GM12878 (cell line): ENCODE measurements at regions of chr6 and their contacts with region 1.

Region 1: DNA sequence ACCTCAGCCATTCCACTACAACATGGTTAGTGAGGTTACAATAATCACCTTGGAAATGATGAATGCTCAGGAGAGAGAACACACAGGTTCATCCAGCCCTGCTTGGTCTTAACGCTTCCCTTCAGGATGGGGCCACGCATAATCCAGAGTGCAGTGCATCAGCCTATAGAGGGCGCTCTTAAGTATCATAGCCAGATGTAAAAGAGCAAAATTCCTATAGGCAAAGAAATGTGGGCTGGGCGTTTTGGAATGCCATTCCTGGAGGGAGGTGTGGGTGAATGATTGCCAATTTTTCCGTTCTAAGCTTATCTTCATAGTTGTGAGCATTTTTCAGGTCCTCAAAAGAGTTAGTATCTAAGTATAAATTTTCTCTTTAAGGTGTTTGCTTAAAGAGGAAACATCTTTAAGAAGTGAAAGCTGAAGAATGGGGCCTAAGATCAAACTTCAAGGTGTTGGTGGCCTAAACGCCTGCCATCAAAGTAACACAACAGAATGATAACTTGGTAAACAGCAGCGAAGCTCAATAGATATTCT is 1.8 kb downstream of the RIPOR2 start:
- DNase-seq: no peak
- ATAC-seq: peak; percentile 14; the same call in 1 of the 3 replicates
- H3K4me3 ChIP-seq: peak overlapping the region; percentile 74
- H3K27ac ChIP-seq: peak overlapping the region; percentile 75
- H3K4me1 ChIP-seq: peaks cover 55% of the 10 kb centered on the region
- H3K27me3 ChIP-seq: no peaks in the 10 kb centered on the region
- CTCF ChIP-seq: peak; percentile 78 to 95 (median 83)
- EP300 ChIP-seq: no peak
- POLR2A ChIP-seq: no peak
- RAD21 ChIP-seq: peak; percentile 57; the same call in 1 of the 2 replicates

Region 2: GRCh38 chr6:24855395-24856245 is 78.3 kb before region 1 on chr6:
- CTCF ChIA-PET with region 1: interaction called, 84 read pairs
- POLR2A ChIA-PET with region 1: interaction called, 3 read pairs
- RAD21 ChIA-PET with region 1: interaction called, 28 read pairs
- SMC1A ChIA-PET with region 1: interaction called, 54 read pairs
- in situ Hi-C with region 1: no loop called
- intact Hi-C with region 1: loop called (anchors 2 kb)
- DNase-seq: peak; percentile 58
- ATAC-seq: peak; percentile 85
- H3K4me3 ChIP-seq: no peak overlapping the region
- H3K27ac ChIP-seq: no peak overlapping the region
- H3K4me1 ChIP-seq: peaks cover 32% of the 10 kb centered on the region
- H3K27me3 ChIP-seq: no peaks in the 10 kb centered on the region
- CTCF ChIP-seq: peak; percentile 78 to 90 (median 87)
- EP300 ChIP-seq: no peak
- POLR2A ChIP-seq: no peak
- RAD21 ChIP-seq: peak; percentile 98

Region 3: DNA sequence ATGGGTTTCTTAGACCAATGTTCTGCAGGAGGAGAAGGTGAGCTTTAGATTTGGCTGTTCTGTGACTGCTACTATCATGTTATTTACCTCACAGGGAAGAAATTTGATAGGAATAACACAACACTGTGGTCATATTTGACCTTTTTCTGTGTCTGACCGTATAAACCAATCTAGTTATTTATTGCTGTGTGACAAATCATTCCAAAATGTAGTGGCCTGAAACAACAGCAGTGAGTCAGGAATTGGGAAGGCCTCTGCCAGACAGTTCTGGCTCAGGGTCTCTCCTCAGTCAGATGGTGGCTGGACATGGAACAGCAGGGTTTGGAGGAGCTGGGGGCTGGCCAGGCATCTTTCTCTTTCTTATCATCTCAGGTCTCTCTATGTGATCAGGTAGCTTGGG is 31.2 kb before region 1 on chr6:
- CTCF ChIA-PET with region 1: interaction called, 139 read pairs
- POLR2A ChIA-PET with region 1: no interaction called
- RAD21 ChIA-PET with region 1: interaction called, 111 read pairs
- SMC1A ChIA-PET with region 1: interaction called, 201 read pairs
- in situ Hi-C with region 1: no loop called
- intact Hi-C with region 1: no loop called
- DNase-seq: no peak
- ATAC-seq: no peak
- H3K4me3 ChIP-seq: no peak overlapping the region
- H3K27ac ChIP-seq: no peak overlapping the region
- H3K4me1 ChIP-seq: no peaks in the 10 kb centered on the region
- H3K27me3 ChIP-seq: no peaks in the 10 kb centered on the region
- CTCF ChIP-seq: no peak
- EP300 ChIP-seq: no peak
- POLR2A ChIP-seq: no peak
- RAD21 ChIP-seq: no peak

Region 4: DNA sequence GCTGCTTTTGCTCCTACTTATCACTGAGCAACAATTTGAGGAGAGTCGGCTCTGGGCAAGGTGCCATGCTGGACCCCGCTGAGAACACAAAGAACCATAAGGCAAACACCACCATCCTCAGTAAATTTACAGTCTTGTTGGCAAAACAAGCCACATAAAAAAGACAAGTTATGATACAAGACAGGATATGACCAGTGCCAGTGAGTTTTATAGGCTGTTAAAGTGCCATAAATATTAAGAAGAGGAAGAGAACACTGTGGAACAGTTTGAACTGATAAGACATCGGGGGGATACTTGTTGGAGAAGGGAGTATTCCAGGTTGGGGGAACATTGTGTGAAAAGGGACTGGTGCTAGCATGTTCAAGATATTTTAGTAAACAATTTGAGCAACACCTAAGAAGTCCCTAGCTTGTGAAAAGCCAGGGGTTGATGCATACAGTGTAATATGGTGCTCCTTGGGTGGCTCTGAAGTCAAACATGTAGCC is 27.1 kb after region 1 on chr6:
- CTCF ChIA-PET with region 1: interaction called, 20 read pairs
- POLR2A ChIA-PET with region 1: interaction called, 5 read pairs
- RAD21 ChIA-PET with region 1: interaction called, 4 read pairs
- SMC1A ChIA-PET with region 1: interaction called, 11 read pairs
- in situ Hi-C with region 1: no loop called
- intact Hi-C with region 1: no loop called
- DNase-seq: no peak
- ATAC-seq: no peak
- H3K4me3 ChIP-seq: no peak overlapping the region
- H3K27ac ChIP-seq: no peak overlapping the region
- H3K4me1 ChIP-seq: peaks cover 8% of the 10 kb centered on the region
- H3K27me3 ChIP-seq: no peaks in the 10 kb centered on the region
- CTCF ChIP-seq: no peak
- EP300 ChIP-seq: no peak
- POLR2A ChIP-seq: no peak
- RAD21 ChIP-seq: no peak

Region 5: DNA sequence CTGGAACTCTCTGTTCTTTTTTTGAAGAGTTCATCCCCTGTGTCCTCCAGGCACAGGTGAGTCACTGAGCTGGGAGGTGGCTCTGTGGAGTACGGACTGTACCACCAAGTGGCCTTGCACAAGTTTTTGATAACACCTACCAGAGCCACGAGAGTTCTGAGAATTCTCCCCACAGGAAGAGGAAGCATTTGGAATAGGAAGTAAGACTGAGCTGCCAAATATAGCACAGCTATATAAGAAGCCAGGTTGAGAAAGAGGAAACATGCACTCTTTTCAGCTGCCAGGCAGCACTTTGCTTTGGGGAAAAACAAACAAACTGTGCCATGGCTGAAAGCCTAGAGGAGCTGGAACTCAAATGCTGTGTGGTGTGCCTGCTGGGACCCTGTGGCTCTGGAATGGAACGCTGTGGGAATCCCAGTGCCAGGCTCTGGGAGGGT is 72.6 kb after region 1 on chr6:
- CTCF ChIA-PET with region 1: interaction called, 50 read pairs
- POLR2A ChIA-PET with region 1: interaction called, 3 read pairs
- RAD21 ChIA-PET with region 1: interaction called, 9 read pairs
- SMC1A ChIA-PET with region 1: interaction called, 37 read pairs
- in situ Hi-C with region 1: no loop called
- intact Hi-C with region 1: no loop called
- DNase-seq: no peak
- ATAC-seq: peak; percentile 72
- H3K4me3 ChIP-seq: 0 out of 2 replicates have a peak overlapping the region, but pooled peaks have one; percentile 28
- H3K27ac ChIP-seq: peak overlapping the region; percentile 46; the same call in 1 of the 2 replicates
- H3K4me1 ChIP-seq: peaks cover 14% of the 10 kb centered on the region
- H3K27me3 ChIP-seq: no peaks in the 10 kb centered on the region
- CTCF ChIP-seq: no peak
- EP300 ChIP-seq: peak in 1 of 2 experiments; percentile 44; a peak in 1 of 4 replicates
- POLR2A ChIP-seq: no peak
- RAD21 ChIP-seq: no peak

Region 6: DNA sequence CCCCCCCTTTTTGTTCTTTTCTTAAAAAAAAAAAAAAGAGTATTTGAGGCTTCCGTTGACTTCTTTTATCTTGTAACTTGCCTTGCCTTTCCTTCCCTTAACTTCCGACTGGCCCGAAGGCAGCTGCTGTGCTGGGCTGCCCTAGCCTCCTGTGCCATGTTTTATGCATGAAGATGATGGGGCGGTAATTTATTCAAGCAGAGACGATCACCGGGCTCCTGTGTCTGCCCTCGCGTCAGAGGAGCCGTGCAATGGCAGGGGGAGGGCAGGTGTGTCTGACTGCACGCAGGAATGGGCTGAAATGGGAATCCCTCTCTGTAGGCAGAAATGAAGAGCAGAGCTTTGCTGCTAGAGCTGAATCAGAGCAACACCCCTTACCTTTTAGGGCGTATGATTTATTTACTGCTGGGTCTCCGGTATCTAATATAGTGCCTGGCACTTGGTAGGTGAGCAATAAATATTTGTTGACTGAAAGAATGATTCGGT is 108.1 kb after region 1 on chr6:
- CTCF ChIA-PET with region 1: interaction called, 14 read pairs
- POLR2A ChIA-PET with region 1: interaction called, 10 read pairs
- RAD21 ChIA-PET with region 1: interaction called, 14 read pairs
- SMC1A ChIA-PET with region 1: interaction called, 10 read pairs
- in situ Hi-C with region 1: no loop called
- intact Hi-C with region 1: no loop called
- DNase-seq: no peak
- ATAC-seq: peak; percentile 62
- H3K4me3 ChIP-seq: peak overlapping the region; percentile 67
- H3K27ac ChIP-seq: peak overlapping the region; percentile 60
- H3K4me1 ChIP-seq: peaks cover 23% of the 10 kb centered on the region
- H3K27me3 ChIP-seq: no peaks in the 10 kb centered on the region
- CTCF ChIP-seq: no peak
- EP300 ChIP-seq: no peak
- POLR2A ChIP-seq: peak; percentile 50; the same call in 1 of the 2 replicates
- RAD21 ChIP-seq: no peak

Region 7: DNA sequence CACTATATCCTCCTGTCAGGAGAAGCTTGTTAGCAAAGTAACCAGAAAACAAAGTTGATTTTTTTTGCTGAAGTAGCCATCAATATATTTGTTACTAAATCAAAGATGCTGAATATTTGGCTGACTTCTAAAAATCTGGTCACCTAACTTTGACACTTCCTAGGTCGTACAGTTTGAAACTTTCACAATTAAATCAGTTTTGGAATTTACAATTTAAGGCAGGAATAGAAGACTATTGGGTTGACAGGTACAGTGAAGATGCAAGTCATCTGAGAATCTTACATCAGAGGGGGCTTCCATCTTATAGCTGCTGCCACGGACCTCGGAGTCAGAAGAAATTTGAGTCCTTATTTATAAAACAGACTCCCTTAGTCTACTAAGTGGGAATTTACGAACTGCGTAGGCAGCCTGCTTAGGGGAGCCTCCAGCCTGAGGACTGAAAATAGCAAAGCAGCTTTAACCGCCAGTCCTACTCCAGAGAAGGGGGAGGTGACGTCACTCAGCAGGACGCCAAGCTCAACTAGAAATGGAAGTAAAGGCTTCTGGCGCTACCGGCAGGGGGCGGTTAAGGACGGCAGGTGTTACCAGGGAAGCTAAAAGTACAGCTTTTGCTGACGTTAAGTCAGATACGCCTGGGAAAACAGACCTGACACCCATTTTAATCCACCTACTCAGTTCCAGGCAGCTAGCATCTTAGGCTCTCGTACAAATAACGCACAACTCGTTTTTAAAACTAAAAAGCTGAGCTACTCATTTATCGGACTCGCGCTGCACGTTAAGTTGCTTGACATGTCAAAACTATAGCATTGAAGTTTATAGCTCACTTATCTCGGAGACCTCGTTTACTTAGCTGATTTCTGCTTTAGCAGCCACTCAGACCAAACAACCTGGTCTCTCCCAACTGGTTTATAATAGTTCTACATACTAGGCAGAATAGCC is 1092.2 kb after region 1 on chr6:
- CTCF ChIA-PET with region 1: no interaction called
- POLR2A ChIA-PET with region 1: no interaction called
- RAD21 ChIA-PET with region 1: no interaction called
- SMC1A ChIA-PET with region 1: no interaction called
- in situ Hi-C with region 1: no loop called
- intact Hi-C with region 1: loop called (anchors 10 kb)
- DNase-seq: peak; percentile 89
- ATAC-seq: peak; percentile 53
- H3K4me3 ChIP-seq: peak overlapping the region; percentile 63
- H3K27ac ChIP-seq: peak overlapping the region; percentile 95
- H3K4me1 ChIP-seq: peaks cover 12% of the 10 kb centered on the region
- H3K27me3 ChIP-seq: no peaks in the 10 kb centered on the region
- CTCF ChIP-seq: peak; percentile 82 to 95 (median 94)
- EP300 ChIP-seq: peak in 1 of 2 experiments; percentile 51; a peak in 2 of 4 replicates
- POLR2A ChIP-seq: no peak
- RAD21 ChIP-seq: peak; percentile 54